ENCODE measurements at regions of chr1 and their contacts with region 1.

Region 1: GRCh38 chr1:111481387-111482221 is 7.8 kb downstream of the C1orf162 start:
- DNase-seq: peak; percentile 81
- ATAC-seq: peak; percentile 96
- H3K4me3 ChIP-seq: no peak overlapping the region
- H3K27ac ChIP-seq: no peak overlapping the region
- H3K4me1 ChIP-seq: peaks cover 4% of the 10 kb centered on the region
- H3K27me3 ChIP-seq: no peaks in the 10 kb centered on the region
- CTCF ChIP-seq: peak; percentile 84

Region 2: GRCh38 chr1:111592389-111593361 is 111.1 kb after region 1 on chr1:
- CTCF ChIA-PET with region 1: interaction called, 13 read pairs
- POLR2A ChIA-PET with region 1: no interaction called
- intact Hi-C with region 1: no loop called
- DNase-seq: peak; percentile 90
- ATAC-seq: peak; percentile 98
- H3K4me3 ChIP-seq: peak overlapping the region; percentile 46
- H3K27ac ChIP-seq: peak overlapping the region; percentile 73
- H3K4me1 ChIP-seq: peaks cover 25% of the 10 kb centered on the region
- H3K27me3 ChIP-seq: no peaks in the 10 kb centered on the region
- CTCF ChIP-seq: no peak

Region 3: DNA sequence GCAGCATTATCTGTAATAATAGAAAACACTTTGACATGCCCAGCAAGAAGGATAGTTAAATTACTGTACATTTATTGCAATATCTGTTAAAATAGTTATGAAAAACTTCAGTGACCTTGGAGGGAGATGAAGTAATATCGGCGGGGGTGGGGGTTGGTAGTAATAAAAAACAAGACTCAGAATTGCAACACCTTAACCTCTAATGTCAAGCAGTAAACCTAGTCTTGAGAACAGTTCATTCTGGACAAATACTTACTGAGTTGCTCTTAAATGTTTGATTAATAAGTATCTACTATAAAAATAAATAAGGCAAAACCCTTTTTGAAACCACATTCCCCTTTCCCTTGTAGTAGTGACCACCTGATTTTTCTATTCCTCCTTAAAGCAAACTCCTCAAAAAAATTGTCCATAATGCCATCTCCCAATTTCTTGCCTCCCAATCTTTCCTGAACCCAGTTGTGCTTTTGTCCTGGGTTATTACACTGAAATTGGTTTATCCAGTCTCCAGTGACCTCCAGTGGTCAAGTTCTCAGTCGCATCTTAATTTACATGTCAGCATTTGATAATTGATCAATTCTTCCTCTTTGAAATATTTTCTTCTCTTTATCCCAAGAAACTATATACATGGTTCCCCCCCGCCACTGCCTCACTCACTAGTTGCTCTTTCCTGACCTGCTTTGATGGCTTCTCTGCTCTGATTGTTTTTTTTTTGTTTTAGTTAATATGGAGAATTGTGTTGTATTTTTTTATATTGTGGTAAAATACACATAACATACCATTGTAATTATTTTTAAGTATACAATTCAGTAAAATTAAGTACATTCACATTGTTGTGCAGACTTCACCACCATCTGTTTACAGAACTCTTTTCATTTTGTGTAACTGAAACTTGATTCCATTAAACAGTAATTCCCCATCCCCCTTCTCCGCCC is 174.7 kb after region 1 on chr1:
- CTCF ChIA-PET with region 1: no interaction called
- POLR2A ChIA-PET with region 1: no interaction called
- intact Hi-C with region 1: loop called (anchors 1 kb)
- DNase-seq: peak; percentile 71
- ATAC-seq: peak; percentile 45; the same call in 1 of the 2 replicates
- H3K4me3 ChIP-seq: no peak overlapping the region
- H3K27ac ChIP-seq: no peak overlapping the region
- H3K4me1 ChIP-seq: no peaks in the 10 kb centered on the region
- H3K27me3 ChIP-seq: no peaks in the 10 kb centered on the region
- CTCF ChIP-seq: peak; percentile 87

Region 4: GRCh38 chr1:111747282-111747734 is 265.7 kb after region 1 on chr1:
- CTCF ChIA-PET with region 1: interaction called, 12 read pairs
- POLR2A ChIA-PET with region 1: no interaction called
- intact Hi-C with region 1: loop called (anchors 1 kb)
- DNase-seq: peak; percentile 85
- ATAC-seq: peak; percentile 92
- H3K4me3 ChIP-seq: no peak overlapping the region
- H3K27ac ChIP-seq: no peak overlapping the region
- H3K4me1 ChIP-seq: no peaks in the 10 kb centered on the region
- H3K27me3 ChIP-seq: no peaks in the 10 kb centered on the region
- CTCF ChIP-seq: peak; percentile 84

Region 5: GRCh38 chr1:111769517-111770146 is 288.0 kb after region 1 on chr1:
- CTCF ChIA-PET with region 1: no interaction called
- POLR2A ChIA-PET with region 1: no interaction called
- intact Hi-C with region 1: loop called (anchors 2 kb)
- DNase-seq: peak; percentile 74
- ATAC-seq: peak; percentile 65
- H3K4me3 ChIP-seq: no peak overlapping the region
- H3K27ac ChIP-seq: no peak overlapping the region
- H3K4me1 ChIP-seq: no peaks in the 10 kb centered on the region
- H3K27me3 ChIP-seq: no peaks in the 10 kb centered on the region
- CTCF ChIP-seq: peak; percentile 89

Measured in PC-3 (cell line).